ENCODE measurements at regions of chr12 and their contacts with region 1.

Region 1: DNA sequence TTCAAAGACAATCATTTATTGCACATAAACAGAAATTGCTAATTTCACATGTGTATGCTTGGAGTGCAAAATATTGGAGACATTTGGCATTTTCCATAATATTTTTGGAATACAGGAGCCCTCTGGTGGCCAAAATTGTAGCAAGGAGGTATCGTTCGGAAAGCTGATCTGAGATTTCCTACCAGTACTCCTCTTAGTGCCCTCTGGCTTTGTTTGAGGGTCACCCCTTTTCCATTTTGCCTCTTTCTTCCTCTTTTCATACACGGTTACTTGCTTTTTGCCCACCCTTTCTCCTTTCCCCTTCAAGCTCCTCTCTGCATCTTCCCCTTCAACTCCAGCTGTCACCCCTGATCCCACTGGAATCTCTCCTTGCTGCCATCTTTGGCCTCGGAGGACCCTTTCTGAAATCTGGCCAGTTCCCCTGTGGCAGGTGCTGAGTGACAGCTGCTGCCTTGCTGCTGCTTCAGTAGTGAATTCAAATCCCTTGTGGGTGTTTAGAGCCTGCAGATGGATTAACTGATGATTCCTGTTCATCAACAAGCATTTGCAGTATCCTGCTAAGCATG is 164.6 kb upstream of the PARP11 start:
- DNase-seq: peak in 1 of 10 donors; percentile 45
- H3K4me3 ChIP-seq: no peak overlapping the region
- H3K27ac ChIP-seq: no peak overlapping the region
- H3K27me3 ChIP-seq: peaks cover 0 to 4% (median 0%) of the 10 kb centered on the region in 45 donors
- CTCF ChIP-seq: peak; percentile 56 to 85 (median 75)

Region 2: GRCh38 chr12:3837049-3837448 is 200.8 kb before region 1 on chr12:
- intact Hi-C with region 1: no loop called
- DNase-seq: no peak
- H3K4me3 ChIP-seq: no peak overlapping the region
- H3K27ac ChIP-seq: no peak overlapping the region
- H3K27me3 ChIP-seq: no peaks in the 10 kb centered on the region
- CTCF ChIP-seq: no peak

Region 3: DNA sequence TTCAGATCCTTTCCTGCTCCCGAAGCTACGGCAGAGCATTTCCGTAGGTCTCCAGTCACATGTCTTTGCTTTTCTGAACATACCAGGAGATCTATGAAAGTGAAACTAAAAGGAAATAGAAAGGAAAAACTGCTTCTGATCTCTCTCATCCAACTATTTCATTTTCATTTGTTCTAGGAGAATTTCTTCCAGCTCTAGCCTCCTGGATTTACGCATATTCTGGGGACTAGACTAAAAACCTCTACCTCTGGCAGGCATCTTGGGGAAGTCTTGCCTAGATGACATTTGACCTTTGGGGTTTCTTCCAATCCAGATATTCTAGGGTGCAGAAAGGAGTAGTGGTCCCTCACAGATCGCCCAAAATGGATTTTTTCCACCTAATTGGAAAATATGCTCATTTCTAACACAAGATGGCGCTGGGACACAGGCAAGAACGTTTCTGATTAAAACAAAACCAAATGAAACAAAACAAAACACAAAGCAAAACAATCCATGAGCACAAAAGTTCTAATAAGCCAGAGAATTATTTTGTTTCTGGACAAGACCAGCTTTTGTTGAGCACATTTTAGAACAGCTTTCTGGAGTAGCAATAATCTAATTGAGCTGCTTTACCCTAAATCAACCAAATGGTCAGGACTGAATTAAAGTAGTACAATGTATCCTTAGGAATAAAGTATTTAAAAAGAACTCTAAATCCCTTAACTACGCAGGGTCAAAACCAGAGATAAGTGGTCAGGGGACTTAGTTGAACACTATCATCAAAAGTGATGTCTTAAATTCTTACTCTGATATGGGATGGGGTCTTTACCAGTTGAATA is 152.3 kb before region 1 on chr12:
- intact Hi-C with region 1: loop called (anchors 2 to 5 kb)
- DNase-seq: peak in 1 of 10 donors; percentile 28
- H3K4me3 ChIP-seq: peak overlapping the region in 58 of 59 donors; percentile 8 to 60 (median 42)
- H3K27ac ChIP-seq: peak overlapping the region in 52 of 59 donors; percentile 2 to 85 (median 67)
- H3K27me3 ChIP-seq: peaks cover 0 to 45% (median 0%) of the 10 kb centered on the region in 45 donors
- CTCF ChIP-seq: peak; percentile 69 to 93 (median 84)

Region 4: DNA sequence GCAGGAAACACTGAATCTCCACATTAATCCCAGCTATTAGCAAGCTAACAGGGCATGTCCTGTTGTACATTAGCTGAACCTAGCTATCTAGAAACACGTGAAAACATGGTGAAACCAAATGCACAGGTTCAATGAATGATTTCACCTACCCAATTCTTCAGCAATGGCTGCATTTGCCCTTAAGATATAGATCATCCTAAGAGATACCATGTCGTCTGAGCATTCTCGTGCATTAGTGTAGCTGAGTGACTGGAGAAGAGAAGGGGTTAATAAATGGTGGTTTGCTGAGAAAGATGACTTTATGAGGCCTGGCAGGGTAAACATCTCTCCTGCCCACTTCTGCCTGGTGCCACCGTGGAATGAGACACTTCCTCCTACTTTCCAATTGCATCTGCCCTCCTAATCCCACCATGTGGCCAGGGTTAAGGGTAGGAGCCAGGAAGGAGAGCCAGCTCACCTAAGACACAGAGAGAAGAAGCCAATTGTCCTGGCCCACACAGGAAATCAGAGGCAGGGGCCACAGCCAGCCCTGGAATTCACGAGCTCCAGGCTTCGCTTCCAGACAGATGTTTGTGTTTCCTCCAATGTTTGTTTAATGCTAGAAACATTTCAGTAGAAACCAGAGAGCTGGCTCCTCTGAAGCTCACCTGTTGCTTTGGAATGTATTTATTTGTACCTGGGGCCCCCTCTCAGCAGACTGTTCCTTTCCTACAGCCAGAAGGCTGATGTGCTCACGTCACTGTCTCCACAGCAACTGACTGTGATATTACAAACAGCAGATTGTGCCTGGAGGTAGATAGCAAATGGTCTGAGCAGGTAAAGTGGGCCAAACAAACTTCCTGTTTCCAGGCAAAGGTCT is 38.6 kb before region 1 on chr12:
- intact Hi-C with region 1: loop called in 1 of 2 experiments (anchors 5 kb)
- DNase-seq: no peak
- H3K4me3 ChIP-seq: no peak overlapping the region
- H3K27ac ChIP-seq: no peak overlapping the region
- H3K27me3 ChIP-seq: peaks cover 0 to 21% (median 0%) of the 10 kb centered on the region in 45 donors
- CTCF ChIP-seq: no peak

Region 5: DNA sequence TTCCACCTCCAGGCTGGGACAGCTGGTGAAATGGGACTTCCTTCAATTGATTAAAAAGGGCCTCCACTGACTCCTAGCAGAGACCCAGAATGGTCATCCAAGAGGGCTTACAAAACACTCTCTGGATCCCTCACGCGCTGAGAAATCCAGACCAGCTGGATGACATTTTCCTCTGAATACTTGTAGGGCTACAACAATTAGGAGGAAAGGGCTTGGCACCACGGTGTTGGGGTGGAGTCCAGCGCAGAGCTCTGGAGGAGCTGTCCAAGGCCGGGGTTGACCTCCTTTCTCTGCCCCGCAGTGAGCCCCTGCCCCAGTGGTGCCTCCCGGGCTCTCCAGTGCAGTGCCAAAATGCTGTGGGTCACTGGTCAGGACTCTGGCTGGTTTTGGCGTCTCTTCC is 46.7 kb after region 1 on chr12:
- intact Hi-C with region 1: no loop called
- DNase-seq: no peak
- H3K4me3 ChIP-seq: no peak overlapping the region
- H3K27ac ChIP-seq: no peak overlapping the region
- H3K27me3 ChIP-seq: peaks cover 0 to 14% (median 0%) of the 10 kb centered on the region in 45 donors
- CTCF ChIP-seq: no peak

Measured in dorsolateral prefrontal cortex (tissue), 120 donors.